Dorsolateral prefrontal cortex (tissue), 120 donors: ENCODE measurements at regions of chr1 and their contacts with region 1.

Region 1: GRCh38 chr1:198157241-198157846 is 546 bp downstream of the NEK7 start:
- DNase-seq: peak; percentile 66 to 95 (median 93)
- H3K4me3 ChIP-seq: peak overlapping the region; percentile 59 to 99 (median 89)
- H3K27ac ChIP-seq: peak overlapping the region; percentile 73 to 99 (median 97)
- H3K27me3 ChIP-seq: no peaks in the 10 kb centered on the region
- CTCF ChIP-seq: peak in 12 of 56 donors; percentile 3 to 36 (median 18)

Region 2: DNA sequence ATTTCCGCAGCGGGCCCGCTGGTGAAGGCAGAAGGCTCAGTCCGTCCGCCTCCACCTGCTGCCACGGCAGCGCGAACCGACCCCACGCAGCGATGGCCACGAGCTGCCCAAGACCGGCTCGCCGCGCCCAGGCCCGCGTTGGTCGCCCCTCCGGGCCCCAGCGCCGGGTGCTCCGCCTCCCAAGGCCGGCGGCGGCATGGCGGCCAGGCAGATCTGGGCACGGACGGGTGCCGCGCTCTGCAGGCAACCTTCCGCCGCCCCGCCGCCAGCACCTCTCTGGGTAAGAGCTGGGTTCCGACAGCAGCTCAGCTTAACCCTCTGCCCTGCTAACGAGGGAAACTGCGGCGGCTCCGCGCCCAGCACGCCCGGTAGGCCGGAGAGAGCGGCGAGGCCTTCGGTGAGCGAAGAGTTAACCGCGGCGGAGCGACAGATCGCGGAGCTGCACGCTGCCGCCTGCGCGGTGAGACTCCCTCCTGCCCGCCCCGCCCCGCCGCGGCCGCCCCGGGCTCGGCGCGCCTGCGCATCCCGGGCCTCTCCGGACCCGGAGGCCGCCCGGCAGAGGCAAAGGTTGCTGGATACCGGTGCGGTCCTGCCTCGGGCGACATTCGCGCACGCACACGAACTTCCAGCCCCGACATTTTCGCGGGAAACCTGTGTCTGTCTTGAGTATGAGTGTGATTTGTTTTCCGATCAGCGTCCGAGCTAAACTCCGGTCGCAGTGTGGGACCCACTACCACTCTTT is 254.7 kb before region 1 on chr1 and contains the start of gene C1orf53:
- intact Hi-C with region 1: loop called (anchors 5 to 10 kb)
- DNase-seq: peak; percentile 71 to 95 (median 86)
- H3K4me3 ChIP-seq: peak within 1 kb of the TSS; percentile 58 to 92 (median 79)
- H3K27ac ChIP-seq: peak within 1 kb of the TSS in 58 of 59 donors; percentile 52 to 95 (median 86)
- H3K27me3 ChIP-seq: peaks cover 0 to 33% (median 3%) of the 10 kb centered on the region in 45 donors
- CTCF ChIP-seq: peak in 26 of 56 donors; percentile 3 to 48 (median 18)
- total RNA-seq, gene C1orf53: 1.1 to 8.0 (median 3.0) TPM in 108 of 120 experiments, not detected in the others

Region 3: GRCh38 chr1:198205016-198205684 is 47.8 kb after region 1 on chr1:
- intact Hi-C with region 1: loop called in 1 of 2 experiments (anchors 5 kb)
- DNase-seq: no peak
- H3K4me3 ChIP-seq: peak overlapping the region in 21 of 59 donors; percentile 2 to 40 (median 25)
- H3K27ac ChIP-seq: peak overlapping the region in 33 of 59 donors; percentile 11 to 72 (median 44)
- H3K27me3 ChIP-seq: no peaks in the 10 kb centered on the region
- CTCF ChIP-seq: no peak

Region 4: DNA sequence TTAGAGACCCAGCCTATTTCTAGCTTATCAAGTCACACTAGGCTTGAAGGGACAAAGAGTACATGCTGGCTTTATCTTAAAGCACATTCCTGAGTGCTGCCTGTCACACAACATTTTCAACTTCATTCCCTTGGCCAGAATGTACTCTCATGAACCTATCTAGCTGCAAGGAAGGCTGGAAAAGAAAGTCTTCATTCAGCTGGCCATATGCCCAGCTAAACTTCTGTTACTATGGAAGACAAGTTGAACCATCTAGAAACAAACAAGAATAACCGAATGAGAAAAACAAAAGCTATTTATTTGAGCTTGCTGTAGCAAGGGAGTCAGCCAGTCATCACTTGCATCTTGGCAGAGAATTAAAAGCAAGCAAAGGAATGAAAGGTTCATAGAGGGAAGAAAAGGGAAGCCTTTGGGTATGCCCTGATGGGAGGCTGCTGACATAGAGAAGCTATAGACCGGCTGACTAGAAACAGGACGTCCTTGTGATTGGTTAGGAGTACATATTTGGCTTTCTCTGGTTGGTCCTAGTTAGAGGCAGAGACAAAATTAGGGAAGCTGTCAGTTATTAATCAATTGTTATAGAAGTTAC is 107.8 kb after region 1 on chr1:
- intact Hi-C with region 1: loop called in 1 of 2 experiments (anchors 5 kb)
- DNase-seq: no peak
- H3K4me3 ChIP-seq: no peak overlapping the region
- H3K27ac ChIP-seq: peak overlapping the region in 3 of 59 donors; percentile 1 to 44 (median 8)
- H3K27me3 ChIP-seq: no peaks in the 10 kb centered on the region
- CTCF ChIP-seq: no peak